GM10248 (cell line): ENCODE measurements at regions of chr13 and their contacts with region 1.

Region 1: GRCh38 chr13:27147530-27148170 is 24.0 kb downstream of the USP12 start:
- DNase-seq: peak; percentile 67
- CTCF ChIP-seq: no peak

Region 2: DNA sequence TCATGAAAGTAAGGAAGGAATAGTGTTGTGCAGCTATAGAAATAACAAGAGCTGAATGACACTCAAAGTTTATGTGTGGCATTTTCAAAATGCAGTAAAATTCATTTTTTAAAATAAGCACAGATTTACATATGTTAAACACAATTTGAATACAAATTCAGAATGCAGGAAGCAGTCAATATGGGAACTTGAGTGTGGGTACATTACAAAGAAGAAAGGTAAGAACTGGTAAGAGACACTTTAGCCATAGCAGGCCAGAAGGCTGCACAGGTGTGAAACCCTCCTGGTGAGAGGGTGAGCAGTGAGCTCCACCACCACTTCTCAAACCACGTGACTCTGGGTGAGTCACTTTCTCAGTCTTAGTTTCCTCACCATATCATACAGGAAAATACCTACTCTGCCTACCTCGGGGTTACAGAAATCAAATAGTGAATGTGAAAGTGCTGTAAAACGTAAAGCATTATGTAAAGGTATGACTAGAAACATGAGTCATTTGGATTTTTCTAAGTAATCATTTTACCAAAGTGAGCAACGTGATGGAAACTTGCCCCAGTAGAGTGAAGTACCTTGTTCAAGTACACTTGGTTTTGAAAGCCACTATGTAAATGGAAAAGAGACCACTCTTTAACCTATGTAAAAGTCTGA is 16.5 kb before region 1 on chr13:
- CTCF ChIA-PET with region 1: interaction called, 24 read pairs
- POLR2A ChIA-PET with region 1: interaction called, 3 read pairs
- DNase-seq: peak; percentile 75
- CTCF ChIP-seq: no peak